Mammary epithelial cell (primary cell): ENCODE measurements at regions of chr5 and their contacts with region 1.

Region 1: DNA sequence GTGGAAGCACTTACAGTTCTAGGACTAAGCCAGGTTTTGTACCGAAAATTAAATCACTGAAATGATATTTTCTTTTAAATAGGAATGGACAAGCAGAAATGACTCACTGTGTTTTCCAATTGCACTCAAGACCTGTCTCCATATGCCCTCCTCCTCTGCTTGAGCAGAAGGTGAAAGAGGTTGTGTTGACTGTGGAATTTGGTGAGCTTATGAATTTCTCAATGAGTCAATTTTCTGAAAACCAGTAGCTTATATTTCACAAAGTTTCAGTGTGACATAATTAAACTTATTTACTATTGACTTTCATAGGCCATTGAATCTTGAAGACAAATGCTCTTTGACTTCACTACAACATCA is 249.9 kb downstream of the NPR3 start:
- DNase-seq: peak; percentile 96
- H3K4me3 ChIP-seq: no peak overlapping the region
- H3K27ac ChIP-seq: peak overlapping the region; percentile 71
- H3K4me1 ChIP-seq: peaks cover 23% of the 10 kb centered on the region
- H3K27me3 ChIP-seq: no peaks in the 10 kb centered on the region
- CTCF ChIP-seq: no peak

Region 2: DNA sequence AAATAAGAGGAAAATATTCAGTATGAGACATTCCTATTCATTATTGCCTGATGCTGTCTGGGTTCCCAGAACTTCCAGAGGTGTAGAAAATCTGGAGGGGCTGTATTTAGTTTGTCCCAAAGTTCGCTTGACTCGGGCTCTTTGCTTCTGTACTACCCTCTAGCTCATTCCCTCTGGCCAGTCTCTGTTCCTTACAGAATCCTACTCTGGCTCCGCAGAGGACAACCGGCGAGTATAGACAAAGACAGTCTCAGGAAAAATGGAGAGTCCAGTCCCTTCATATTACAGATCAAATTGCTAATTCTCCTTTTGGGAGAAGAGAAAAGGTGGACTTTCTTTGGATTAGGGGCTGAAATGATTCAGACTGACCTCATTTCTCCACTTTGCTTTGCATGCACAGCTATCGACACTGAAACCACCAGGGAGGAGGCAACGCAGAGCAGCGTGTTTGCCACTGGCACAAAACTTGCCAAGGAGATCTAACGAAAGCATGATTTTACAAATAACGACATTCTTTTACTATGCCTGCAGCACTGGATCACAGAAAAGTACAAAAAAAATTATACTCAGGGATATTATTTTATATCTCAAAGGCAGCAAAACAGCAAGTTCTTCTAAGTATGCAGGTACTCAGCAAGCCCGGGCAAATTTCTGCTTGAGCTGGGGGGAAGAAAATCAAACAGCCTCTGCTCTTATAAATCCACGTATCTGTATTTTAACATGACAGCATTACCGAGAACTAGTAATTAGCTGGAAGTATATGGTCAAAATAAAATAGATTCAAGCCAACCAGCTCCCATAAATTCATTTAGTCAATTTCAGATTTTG is 29.8 kb after region 1 on chr5:
- CTCF ChIA-PET with region 1: no interaction called
- dilution Hi-C with region 1: no loop called
- in situ Hi-C with region 1: no loop called
- intact Hi-C with region 1: loop called (anchors 2 kb)
- DNase-seq: peak; percentile 76
- H3K4me3 ChIP-seq: peak overlapping the region in 1 of 3 experiments; percentile 28
- H3K27ac ChIP-seq: peak overlapping the region; percentile 92
- H3K4me1 ChIP-seq: peaks cover 26% of the 10 kb centered on the region
- H3K27me3 ChIP-seq: no peaks in the 10 kb centered on the region
- CTCF ChIP-seq: no peak